ENCODE measurements at regions of chr19 and their contacts with region 1.

Region 1: DNA sequence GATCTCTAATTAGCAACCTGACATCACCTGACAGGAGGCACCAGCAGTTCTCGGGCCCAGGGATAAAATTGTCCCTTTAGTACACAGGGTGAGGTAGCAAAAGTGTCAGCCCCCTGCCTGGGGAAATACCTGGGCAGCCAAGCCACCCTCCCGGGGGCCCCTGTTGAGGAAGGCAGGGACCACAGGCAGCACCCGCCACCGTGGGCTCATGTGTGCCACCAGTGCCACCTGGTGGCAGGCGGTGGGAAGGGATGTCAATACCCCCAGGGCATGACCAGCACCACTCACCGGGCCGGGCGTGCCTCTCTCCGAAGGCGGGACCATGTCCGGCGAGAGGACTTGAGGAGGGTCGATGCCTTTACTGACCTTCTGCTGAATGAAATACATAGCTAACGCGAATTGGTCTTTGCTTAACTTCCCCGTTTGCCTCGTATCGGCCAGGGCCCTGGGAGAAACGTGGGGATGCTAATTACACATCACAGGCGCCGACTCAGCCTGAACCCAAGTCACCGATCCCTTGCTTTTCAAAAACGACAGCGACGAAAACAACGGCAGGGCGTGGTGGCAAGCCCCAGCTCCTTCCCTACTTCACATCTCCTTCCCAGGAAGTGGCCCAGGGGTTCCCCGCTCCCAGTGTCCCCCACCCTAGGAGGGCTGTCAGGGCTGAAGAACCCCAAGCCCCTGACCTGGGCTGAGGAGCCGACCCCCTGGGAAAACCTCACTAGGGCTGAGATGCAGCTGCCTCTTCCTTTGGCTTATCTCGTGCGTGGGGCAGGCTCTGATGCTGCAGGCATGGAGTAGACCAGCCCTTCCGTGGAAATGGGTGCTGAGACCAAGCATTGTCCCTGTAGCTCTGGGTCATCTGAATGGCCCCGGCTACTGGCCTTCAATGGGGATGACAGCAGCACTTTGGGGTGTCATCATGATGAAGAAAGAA is 53.8 kb downstream of the EPS15L1 start:
- DNase-seq: peak; percentile 72 to 90
- H3K4me3 ChIP-seq: no peak overlapping the region
- H3K27ac ChIP-seq: no peak overlapping the region
- H3K4me1 ChIP-seq: peaks cover 0 to 6% (median 0%) of the 10 kb centered on the region in 4 experiments; a peak in 2 of 7 replicates
- H3K27me3 ChIP-seq: no peaks in the 10 kb centered on the region; a peak in 1 of 7 replicates
- CTCF ChIP-seq: peak; percentile 87 to 97 (median 92)
- EP300 ChIP-seq: no peak
- POLR2A ChIP-seq: no peak
- RAD21 ChIP-seq: peak; percentile 66 to 75

Region 2: GRCh38 chr19:16394681-16395375 is 23.1 kb before region 1 on chr19:
- CTCF ChIA-PET with region 1: interaction called, 10 read pairs
- POLR2A ChIA-PET with region 1: no interaction called
- DNase-seq: no peak
- H3K4me3 ChIP-seq: no peak overlapping the region
- H3K27ac ChIP-seq: no peak overlapping the region
- H3K4me1 ChIP-seq: no peaks in the 10 kb centered on the region
- H3K27me3 ChIP-seq: no peaks in the 10 kb centered on the region
- CTCF ChIP-seq: no peak
- EP300 ChIP-seq: no peak
- POLR2A ChIP-seq: no peak
- RAD21 ChIP-seq: no peak

Region 3: GRCh38 chr19:16403151-16403977 is 14.6 kb before region 1 on chr19:
- CTCF ChIA-PET with region 1: interaction called, 33 read pairs
- POLR2A ChIA-PET with region 1: no interaction called
- DNase-seq: no peak
- H3K4me3 ChIP-seq: no peak overlapping the region
- H3K27ac ChIP-seq: no peak overlapping the region
- H3K4me1 ChIP-seq: no peaks in the 10 kb centered on the region
- H3K27me3 ChIP-seq: no peaks in the 10 kb centered on the region
- CTCF ChIP-seq: no peak
- EP300 ChIP-seq: no peak
- POLR2A ChIP-seq: no peak
- RAD21 ChIP-seq: no peak

Measured in H1 (cell line).